Left ventricle myocardium inferior (tissue), 1 donor: ENCODE measurements at regions of chr15 and their contacts with region 1.

Region 1: GRCh38 chr15:74144153-74144775 is 13.9 kb downstream of the ISLR2 start:
- DNase-seq: no peak
- H3K4me3 ChIP-seq: no peak overlapping the region
- H3K27ac ChIP-seq: no peak overlapping the region
- H3K4me1 ChIP-seq: no peaks in the 10 kb centered on the region
- H3K27me3 ChIP-seq: no peaks in the 10 kb centered on the region
- CTCF ChIP-seq: no peak

Region 2: DNA sequence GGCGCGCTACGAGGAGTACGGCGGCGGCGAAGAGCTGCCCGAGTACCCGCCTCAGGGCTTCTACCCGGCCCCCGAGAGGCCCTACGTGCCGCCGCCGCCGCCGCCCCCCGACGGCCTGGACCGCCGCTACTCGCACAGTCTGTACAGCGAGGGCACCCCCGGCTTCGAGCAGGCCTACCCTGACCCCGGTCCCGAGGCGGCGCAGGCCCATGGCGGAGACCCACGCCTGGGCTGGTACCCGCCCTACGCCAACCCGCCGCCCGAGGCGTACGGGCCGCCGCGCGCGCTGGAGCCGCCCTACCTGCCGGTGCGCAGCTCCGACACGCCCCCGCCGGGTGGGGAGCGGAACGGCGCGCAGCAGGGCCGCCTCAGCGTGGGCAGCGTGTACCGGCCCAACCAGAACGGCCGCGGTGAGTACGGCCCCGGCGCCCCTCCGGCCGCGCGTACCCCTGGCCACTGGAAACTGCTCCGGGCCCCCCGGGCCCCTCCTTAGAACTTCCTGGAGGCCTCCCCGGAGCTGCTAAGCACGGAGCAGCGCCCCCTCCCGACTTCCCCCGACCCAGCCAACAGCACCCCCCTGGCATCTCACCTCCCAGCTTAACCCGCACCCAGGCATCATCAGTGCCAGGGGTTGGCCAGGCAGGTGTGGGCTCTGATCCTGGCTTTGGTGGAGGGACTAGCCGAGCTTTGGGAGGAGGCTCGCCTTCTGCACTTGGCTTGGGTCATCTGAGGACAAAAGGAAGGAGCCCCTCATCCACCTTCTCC is 216.6 kb before region 1 on chr15:
- intact Hi-C with region 1: no loop called
- DNase-seq: peak; percentile 65
- H3K4me3 ChIP-seq: peak overlapping the region; percentile 77
- H3K27ac ChIP-seq: peak overlapping the region; percentile 87
- H3K4me1 ChIP-seq: peaks cover 94% of the 10 kb centered on the region
- H3K27me3 ChIP-seq: peaks cover 36% of the 10 kb centered on the region
- CTCF ChIP-seq: peak; percentile 60

Region 3: GRCh38 chr15:74235962-74236361 is 91.7 kb after region 1 on chr15 and contains the start of gene CCDC33:
- intact Hi-C with region 1: loop called (anchors 10 kb)
- DNase-seq: no peak
- H3K4me3 ChIP-seq: no peak within 1 kb of the TSS
- H3K27ac ChIP-seq: no peak within 1 kb of the TSS
- H3K4me1 ChIP-seq: peaks cover 25% of the 10 kb centered on the region
- H3K27me3 ChIP-seq: no peaks in the 10 kb centered on the region
- CTCF ChIP-seq: no peak
- total RNA-seq, gene CCDC33: 0.11 TPM

Region 4: GRCh38 chr15:74283368-74283767 is 139.1 kb after region 1 on chr15:
- intact Hi-C with region 1: no loop called
- DNase-seq: no peak
- H3K4me3 ChIP-seq: no peak overlapping the region
- H3K27ac ChIP-seq: no peak overlapping the region
- H3K4me1 ChIP-seq: no peaks in the 10 kb centered on the region
- H3K27me3 ChIP-seq: peaks cover 76% of the 10 kb centered on the region
- CTCF ChIP-seq: no peak